ENCODE measurements at regions of chr3 and their contacts with region 1.

Region 1: DNA sequence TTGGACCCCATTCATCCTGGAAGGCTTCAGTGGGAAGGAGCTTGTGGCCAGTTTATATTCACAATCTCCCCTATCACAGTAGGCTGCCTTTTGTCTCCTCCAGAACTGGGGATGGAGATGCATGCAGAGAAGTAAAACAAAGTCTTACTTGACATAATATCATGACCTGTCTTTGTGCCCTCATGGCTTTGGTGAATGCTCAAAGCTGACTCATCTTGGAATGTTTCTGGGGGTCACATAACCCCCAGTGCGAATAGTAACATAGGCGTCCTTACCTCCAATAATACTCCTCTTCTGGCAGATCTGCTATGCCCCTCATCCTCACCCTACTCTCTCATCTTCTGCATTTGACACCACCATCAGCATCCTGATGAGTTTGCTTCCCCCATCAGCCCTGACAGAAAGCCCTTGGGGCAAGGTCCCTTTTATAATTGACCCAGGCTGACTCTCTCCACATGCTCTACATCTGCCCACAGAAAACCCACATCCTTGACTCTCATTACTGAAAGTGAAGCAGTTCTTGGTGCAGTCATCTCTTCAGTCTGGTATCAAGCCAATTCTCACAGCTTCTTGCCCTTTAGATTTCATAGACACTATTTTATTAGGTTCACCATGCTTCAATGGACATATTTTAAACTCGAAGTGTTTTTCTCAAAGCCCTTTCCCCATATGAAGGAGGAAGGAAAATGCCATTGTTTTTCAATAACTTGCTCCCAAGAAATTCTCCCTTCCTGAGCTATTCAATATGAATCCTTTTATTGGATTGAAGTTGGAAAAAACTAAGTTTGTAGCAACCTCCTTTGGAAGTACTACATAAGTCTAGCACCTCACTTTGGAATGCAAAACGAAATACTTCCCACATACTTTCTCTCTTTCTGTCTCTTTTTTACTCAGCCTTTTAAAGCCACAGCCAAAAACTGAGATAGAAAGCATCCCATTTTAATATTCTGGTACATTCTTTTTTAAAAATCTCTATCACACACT is 36.6 kb downstream of the OSTN start:
- DNase-seq: peak in 1 of 2 experiments; percentile 34
- H3K4me3 ChIP-seq: no peak overlapping the region
- H3K27ac ChIP-seq: peak overlapping the region; percentile 85; the same call in 1 of the 2 replicates
- H3K4me1 ChIP-seq: peaks cover 47% of the 10 kb centered on the region
- H3K27me3 ChIP-seq: no peaks in the 10 kb centered on the region
- CTCF ChIP-seq: no peak

Region 2: DNA sequence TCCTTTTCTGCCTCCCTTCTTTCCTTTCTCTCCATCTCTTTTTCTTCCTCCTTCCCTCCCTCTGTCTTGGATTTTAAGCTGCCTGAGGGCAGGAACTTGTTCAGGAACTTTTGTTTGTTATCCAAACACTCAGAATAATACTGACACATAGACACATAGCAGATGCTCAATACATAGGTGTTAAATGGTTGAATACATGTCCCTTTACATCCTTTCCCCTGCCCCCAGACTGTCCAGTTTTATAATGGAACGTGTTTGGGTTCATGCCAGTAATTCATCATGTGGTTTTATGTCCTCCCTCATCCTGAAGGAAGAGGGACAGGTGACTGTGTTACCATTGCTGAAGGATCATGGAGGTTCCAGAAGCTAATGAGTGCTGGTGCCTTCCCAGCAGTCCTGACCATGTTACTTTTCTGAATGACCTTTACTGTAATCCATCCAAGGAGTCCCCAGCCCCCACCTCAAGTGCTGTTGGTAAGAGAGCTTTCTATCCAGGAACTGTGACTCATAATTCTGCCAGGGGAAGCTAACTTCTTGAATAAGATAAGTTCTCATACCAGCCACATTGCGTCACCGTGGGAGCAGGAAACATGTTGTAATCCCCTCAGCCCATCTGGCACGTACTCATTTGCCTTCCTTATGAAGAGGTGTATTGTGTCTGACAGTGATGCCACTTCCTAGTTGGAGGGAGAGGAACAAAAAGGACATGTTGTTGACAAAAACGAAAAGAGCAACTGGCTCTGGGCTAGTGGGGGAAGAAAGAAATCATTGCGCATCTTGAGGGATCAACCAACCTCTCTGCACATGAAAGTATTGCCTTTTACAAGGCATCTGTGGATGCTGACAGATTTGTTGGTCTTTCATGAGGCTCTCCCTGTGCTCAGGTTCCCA is 669.3 kb before region 1 on chr3:
- CTCF ChIA-PET with region 1: no interaction called
- POLR2A ChIA-PET with region 1: no interaction called
- intact Hi-C with region 1: loop called (anchors 10 kb)
- DNase-seq: peak; percentile 94 to 100
- H3K4me3 ChIP-seq: no peak overlapping the region
- H3K27ac ChIP-seq: peak overlapping the region; percentile 82
- H3K4me1 ChIP-seq: peaks cover 33% of the 10 kb centered on the region
- H3K27me3 ChIP-seq: no peaks in the 10 kb centered on the region
- CTCF ChIP-seq: no peak

Region 3: GRCh38 chr3:190883973-190884832 is 351.4 kb before region 1 on chr3:
- CTCF ChIA-PET with region 1: no interaction called
- POLR2A ChIA-PET with region 1: no interaction called
- intact Hi-C with region 1: loop called (anchors 5 kb)
- DNase-seq: peak; percentile 48 to 50
- H3K4me3 ChIP-seq: no peak overlapping the region
- H3K27ac ChIP-seq: no peak overlapping the region
- H3K4me1 ChIP-seq: no peaks in the 10 kb centered on the region
- H3K27me3 ChIP-seq: no peaks in the 10 kb centered on the region
- CTCF ChIP-seq: peak; percentile 97

Region 4: GRCh38 chr3:190983875-190984274 is 251.7 kb before region 1 on chr3:
- CTCF ChIA-PET with region 1: no interaction called
- POLR2A ChIA-PET with region 1: no interaction called
- intact Hi-C with region 1: no loop called
- DNase-seq: no peak
- H3K4me3 ChIP-seq: no peak overlapping the region
- H3K27ac ChIP-seq: no peak overlapping the region
- H3K4me1 ChIP-seq: no peaks in the 10 kb centered on the region
- H3K27me3 ChIP-seq: no peaks in the 10 kb centered on the region
- CTCF ChIP-seq: no peak

Region 5: DNA sequence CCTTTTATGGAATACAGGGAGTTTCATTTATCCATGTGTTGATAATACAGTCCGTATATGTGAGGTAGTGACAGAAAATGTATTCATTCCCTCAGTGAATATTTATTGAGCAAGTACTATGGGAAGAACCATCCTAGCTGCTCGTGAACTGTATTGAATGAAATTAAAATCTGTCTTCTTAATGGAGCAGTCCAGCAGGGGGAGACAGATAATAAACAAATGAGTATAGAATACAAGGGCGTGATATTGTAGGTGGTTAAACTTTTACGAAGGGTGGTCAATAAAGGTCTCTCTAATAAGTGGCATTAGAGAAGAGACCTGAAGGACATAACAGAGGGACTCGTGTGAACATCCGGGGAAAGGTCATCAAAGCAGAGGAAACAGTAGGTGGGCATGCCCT is 99.3 kb before region 1 on chr3:
- CTCF ChIA-PET with region 1: no interaction called
- POLR2A ChIA-PET with region 1: no interaction called
- intact Hi-C with region 1: loop called (anchors 5 kb)
- DNase-seq: no peak
- H3K4me3 ChIP-seq: no peak overlapping the region
- H3K27ac ChIP-seq: no peak overlapping the region
- H3K4me1 ChIP-seq: no peaks in the 10 kb centered on the region; the same call in 1 of the 2 replicates
- H3K27me3 ChIP-seq: no peaks in the 10 kb centered on the region
- CTCF ChIP-seq: peak; percentile 73

Region 6: GRCh38 chr3:191376516-191377141 is 141.0 kb after region 1 on chr3:
- CTCF ChIA-PET with region 1: no interaction called
- POLR2A ChIA-PET with region 1: no interaction called
- intact Hi-C with region 1: loop called (anchors 5 kb)
- DNase-seq: peak in 1 of 2 experiments; percentile 26
- H3K4me3 ChIP-seq: no peak overlapping the region
- H3K27ac ChIP-seq: 0 out of 2 replicates have a peak overlapping the region, but pooled peaks have one; percentile 5
- H3K4me1 ChIP-seq: no peaks in the 10 kb centered on the region
- H3K27me3 ChIP-seq: no peaks in the 10 kb centered on the region
- CTCF ChIP-seq: no peak

Region 7: DNA sequence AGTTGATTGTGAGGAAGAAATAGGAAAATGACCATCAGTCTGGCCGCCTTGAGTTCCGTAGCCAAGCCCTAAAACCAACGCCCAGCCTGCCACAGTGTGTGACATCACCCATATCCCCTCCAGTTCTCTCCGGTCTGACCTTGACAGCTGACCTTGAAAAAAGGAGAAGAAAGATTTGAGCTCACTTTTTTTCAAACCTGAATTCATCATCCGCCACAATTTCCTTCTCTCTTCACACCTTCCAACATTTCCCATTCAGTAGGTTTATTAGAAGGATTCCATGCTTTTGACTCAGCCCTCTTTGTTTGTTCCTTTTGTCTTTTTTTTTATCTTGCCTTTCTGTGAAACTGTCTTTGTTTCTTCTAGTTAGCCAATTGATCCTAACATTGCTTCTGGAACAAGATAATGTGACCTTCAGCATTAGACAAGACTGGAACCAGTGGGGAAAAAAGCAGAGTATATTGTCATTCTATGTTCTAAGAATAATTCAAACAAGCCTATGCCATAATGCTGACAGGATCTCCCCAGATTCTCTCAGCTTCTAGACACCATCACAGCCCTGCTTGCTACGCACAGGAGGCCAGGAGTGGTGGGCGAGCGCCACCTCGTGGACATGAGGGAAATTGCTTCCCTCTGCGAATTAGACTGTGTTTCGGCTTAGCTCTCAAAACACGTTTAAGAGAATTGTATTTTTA is 1208.6 kb after region 1 on chr3:
- CTCF ChIA-PET with region 1: interaction called, 7 read pairs
- POLR2A ChIA-PET with region 1: no interaction called
- intact Hi-C with region 1: loop called (anchors 2 kb)
- DNase-seq: peak; percentile 58 to 73
- H3K4me3 ChIP-seq: no peak overlapping the region
- H3K27ac ChIP-seq: no peak overlapping the region
- H3K4me1 ChIP-seq: no peaks in the 10 kb centered on the region
- H3K27me3 ChIP-seq: no peaks in the 10 kb centered on the region
- CTCF ChIP-seq: peak; percentile 100